B cell (primary cell): ENCODE measurements at regions of chr2 and their contacts with region 1.

Region 1: GRCh38 chr2:181715033-181715630 is 34.8 kb upstream of the NEUROD1 start:
- DNase-seq: peak; percentile 78
- ATAC-seq: peak; percentile 69
- H3K4me3 ChIP-seq: no peak overlapping the region
- H3K4me3 Mint-ChIP-seq: no peak overlapping the region
- H3K27ac ChIP-seq: no peak overlapping the region
- H3K27ac Mint-ChIP-seq: no peak overlapping the region
- H3K4me1 ChIP-seq: no peaks in the 10 kb centered on the region
- H3K4me1 Mint-ChIP-seq: no peaks in the 10 kb centered on the region
- H3K27me3 ChIP-seq: no peaks in the 10 kb centered on the region
- H3K27me3 Mint-ChIP-seq: no peaks in the 10 kb centered on the region
- CTCF ChIP-seq: peak; percentile 84

Region 2: DNA sequence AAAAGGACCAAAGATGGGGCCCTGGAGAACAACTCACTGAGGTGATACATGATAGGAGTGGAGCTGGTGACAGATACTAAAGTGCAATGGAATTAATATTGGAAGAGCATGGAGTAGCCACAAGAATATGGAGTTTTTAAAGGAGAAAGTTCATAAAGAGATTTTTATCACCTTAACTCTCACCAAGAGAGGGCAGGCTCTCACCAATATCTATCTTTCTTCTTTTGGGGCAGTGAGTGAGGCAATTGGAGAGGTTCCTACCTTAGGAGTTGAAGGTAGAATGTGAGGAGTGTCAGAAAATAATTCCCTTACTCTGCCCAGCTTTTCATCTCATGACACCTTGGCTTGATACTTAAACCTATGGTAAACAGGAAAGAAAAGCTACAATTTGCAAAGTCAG is 1474.4 kb before region 1 on chr2:
- CTCF ChIA-PET with region 1: no interaction called
- POLR2A ChIA-PET with region 1: no interaction called
- intact Hi-C with region 1: loop called (anchors 5 kb)
- DNase-seq: peak; percentile 13
- ATAC-seq: no peak
- H3K4me3 ChIP-seq: no peak overlapping the region
- H3K4me3 Mint-ChIP-seq: no peak overlapping the region
- H3K27ac ChIP-seq: no peak overlapping the region
- H3K27ac Mint-ChIP-seq: no peak overlapping the region
- H3K4me1 ChIP-seq: no peaks in the 10 kb centered on the region
- H3K4me1 Mint-ChIP-seq: no peaks in the 10 kb centered on the region
- H3K27me3 ChIP-seq: no peaks in the 10 kb centered on the region
- H3K27me3 Mint-ChIP-seq: peaks cover 3% of the 10 kb centered on the region
- CTCF ChIP-seq: peak; percentile 28

Region 3: DNA sequence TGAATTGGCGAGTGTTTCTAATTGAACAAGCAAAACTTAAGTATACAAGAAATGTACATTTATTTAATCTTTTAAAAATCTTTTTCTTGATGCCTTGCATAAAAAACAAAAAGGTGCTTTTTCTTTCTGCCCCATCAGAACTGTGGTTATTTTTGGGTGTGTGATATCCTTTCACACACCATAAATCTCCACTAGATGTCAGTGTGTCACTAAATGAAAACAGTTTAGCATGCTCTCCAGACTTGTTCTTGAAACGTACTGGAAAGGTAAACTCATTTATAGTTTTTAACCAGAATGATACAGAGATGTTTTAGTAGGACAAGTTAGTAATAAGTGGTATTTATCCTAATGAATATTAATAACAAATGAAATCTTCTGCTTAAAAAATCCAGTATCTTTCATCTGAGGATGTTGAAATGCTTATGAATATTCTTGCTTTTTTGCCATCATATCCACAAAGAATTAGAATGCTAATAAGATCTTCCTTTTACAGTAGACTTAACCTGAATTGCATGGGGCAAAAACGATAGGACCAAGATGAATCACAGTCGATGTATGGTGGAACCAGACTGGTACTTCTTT is 637.9 kb before region 1 on chr2:
- CTCF ChIA-PET with region 1: interaction called, 27 read pairs
- POLR2A ChIA-PET with region 1: no interaction called
- intact Hi-C with region 1: loop called (anchors 1 kb)
- DNase-seq: peak; percentile 70
- ATAC-seq: peak; percentile 65
- H3K4me3 ChIP-seq: no peak overlapping the region
- H3K4me3 Mint-ChIP-seq: no peak overlapping the region
- H3K27ac ChIP-seq: no peak overlapping the region
- H3K27ac Mint-ChIP-seq: no peak overlapping the region
- H3K4me1 ChIP-seq: no peaks in the 10 kb centered on the region
- H3K4me1 Mint-ChIP-seq: peaks cover 5% of the 10 kb centered on the region
- H3K27me3 ChIP-seq: no peaks in the 10 kb centered on the region
- H3K27me3 Mint-ChIP-seq: no peaks in the 10 kb centered on the region
- CTCF ChIP-seq: peak; percentile 85

Region 4: DNA sequence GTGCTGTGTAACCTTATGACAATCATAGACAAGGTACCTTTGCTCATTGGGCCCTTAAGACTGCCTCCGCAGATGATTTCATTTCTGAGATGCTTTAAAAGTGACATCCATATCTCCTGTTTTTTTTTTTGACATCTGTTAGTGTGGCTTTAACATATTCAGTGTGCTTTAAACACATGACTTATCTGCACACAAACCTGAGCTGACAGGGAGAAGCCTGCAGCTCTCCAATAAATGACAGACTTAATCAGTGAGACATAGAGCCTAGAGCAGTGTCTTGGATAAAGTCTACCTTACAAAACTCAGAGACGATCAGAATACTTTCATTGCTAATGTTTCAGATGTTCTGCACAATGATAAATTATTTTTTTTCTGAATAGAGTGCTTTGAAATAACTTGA is 604.1 kb before region 1 on chr2:
- CTCF ChIA-PET with region 1: interaction called, 96 read pairs
- POLR2A ChIA-PET with region 1: no interaction called
- intact Hi-C with region 1: no loop called
- DNase-seq: no peak
- ATAC-seq: no peak
- H3K4me3 ChIP-seq: no peak overlapping the region
- H3K4me3 Mint-ChIP-seq: no peak overlapping the region
- H3K27ac ChIP-seq: no peak overlapping the region
- H3K27ac Mint-ChIP-seq: no peak overlapping the region
- H3K4me1 ChIP-seq: no peaks in the 10 kb centered on the region
- H3K4me1 Mint-ChIP-seq: no peaks in the 10 kb centered on the region
- H3K27me3 ChIP-seq: no peaks in the 10 kb centered on the region
- H3K27me3 Mint-ChIP-seq: no peaks in the 10 kb centered on the region
- CTCF ChIP-seq: no peak

Region 5: GRCh38 chr2:181573140-181573736 is 141.9 kb before region 1 on chr2:
- CTCF ChIA-PET with region 1: interaction called, 23 read pairs
- POLR2A ChIA-PET with region 1: no interaction called
- intact Hi-C with region 1: loop called (anchors 5 kb)
- DNase-seq: no peak
- ATAC-seq: no peak
- H3K4me3 ChIP-seq: no peak overlapping the region
- H3K4me3 Mint-ChIP-seq: no peak overlapping the region
- H3K27ac ChIP-seq: no peak overlapping the region
- H3K27ac Mint-ChIP-seq: no peak overlapping the region
- H3K4me1 ChIP-seq: no peaks in the 10 kb centered on the region
- H3K4me1 Mint-ChIP-seq: no peaks in the 10 kb centered on the region
- H3K27me3 ChIP-seq: peaks cover 0 to 6% (median 2%) of the 10 kb centered on the region in 4 experiments
- H3K27me3 Mint-ChIP-seq: peaks cover 12% of the 10 kb centered on the region
- CTCF ChIP-seq: peak; percentile 17

Region 6: GRCh38 chr2:181946498-181947127 is 231.5 kb after region 1 on chr2:
- CTCF ChIA-PET with region 1: no interaction called
- POLR2A ChIA-PET with region 1: no interaction called
- intact Hi-C with region 1: no loop called
- DNase-seq: no peak
- ATAC-seq: no peak
- H3K4me3 ChIP-seq: no peak overlapping the region
- H3K4me3 Mint-ChIP-seq: no peak overlapping the region
- H3K27ac ChIP-seq: no peak overlapping the region
- H3K27ac Mint-ChIP-seq: no peak overlapping the region
- H3K4me1 ChIP-seq: no peaks in the 10 kb centered on the region
- H3K4me1 Mint-ChIP-seq: no peaks in the 10 kb centered on the region
- H3K27me3 ChIP-seq: peaks cover 0 to 3% (median 0%) of the 10 kb centered on the region in 4 experiments
- H3K27me3 Mint-ChIP-seq: peaks cover 21% of the 10 kb centered on the region
- CTCF ChIP-seq: no peak